ENCODE measurements at regions of chr22 and their contacts with region 1.

Region 1: GRCh38 chr22:43187171-43188099 is 501 bp upstream of the TTLL12 start:
- DNase-seq: peak; percentile 80 to 98
- H3K4me3 ChIP-seq: peak overlapping the region; percentile 52 to 96
- H3K27ac ChIP-seq: peak overlapping the region; percentile 91 to 95
- H3K4me1 ChIP-seq: peaks cover 0 to 19% of the 10 kb centered on the region in 2 donors
- H3K27me3 ChIP-seq: no peaks in the 10 kb centered on the region
- CTCF ChIP-seq: peak; percentile 45 to 74 (median 65)

Region 2: DNA sequence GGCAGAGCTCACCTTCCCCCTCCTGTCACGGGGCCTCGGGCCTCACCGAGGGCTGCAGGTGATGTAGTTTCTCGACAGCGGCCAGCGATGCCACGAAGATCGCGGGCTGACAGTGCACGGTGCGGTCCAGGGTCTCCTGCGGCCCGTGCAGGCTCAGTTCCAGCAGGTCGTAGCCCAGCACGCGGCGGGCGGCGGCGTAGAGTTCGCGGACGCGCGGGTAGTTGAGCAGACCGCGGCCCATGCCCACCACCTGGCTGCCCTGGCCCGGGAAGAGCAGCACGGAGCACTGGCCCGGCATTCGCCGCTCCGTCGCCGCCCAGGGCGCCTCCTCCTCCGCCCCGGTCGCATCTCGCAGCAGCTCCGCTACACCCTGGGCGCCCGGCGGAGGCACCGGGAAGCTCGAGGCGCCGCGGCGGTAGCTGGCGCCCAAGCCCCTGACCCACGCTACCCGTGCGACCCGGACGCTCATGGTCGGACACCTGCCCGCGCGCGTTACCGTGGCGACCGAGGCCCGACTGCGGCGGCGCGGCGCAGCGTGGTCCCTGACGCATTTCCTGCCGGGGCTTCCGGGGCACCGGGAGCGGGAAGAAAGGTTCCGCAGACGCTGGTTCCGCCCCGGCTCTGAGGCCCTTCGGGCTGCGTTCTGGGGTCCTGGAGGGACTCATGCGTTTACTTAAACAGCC is 44.4 kb before region 1 on chr22 and contains the start of gene MCAT:
- intact Hi-C with region 1: loop called (anchors 2 kb)
- DNase-seq: peak in 1 of 2 donors; percentile 92
- H3K4me3 ChIP-seq: peak within 1 kb of the TSS; percentile 65 to 88
- H3K27ac ChIP-seq: peak within 1 kb of the TSS; percentile 33 to 77
- H3K4me1 ChIP-seq: peaks cover 3 to 11% of the 10 kb centered on the region in 2 donors
- H3K27me3 ChIP-seq: no peaks in the 10 kb centered on the region
- CTCF ChIP-seq: no peak
- total RNA-seq, gene MCAT: 4.6 TPM

Region 3: DNA sequence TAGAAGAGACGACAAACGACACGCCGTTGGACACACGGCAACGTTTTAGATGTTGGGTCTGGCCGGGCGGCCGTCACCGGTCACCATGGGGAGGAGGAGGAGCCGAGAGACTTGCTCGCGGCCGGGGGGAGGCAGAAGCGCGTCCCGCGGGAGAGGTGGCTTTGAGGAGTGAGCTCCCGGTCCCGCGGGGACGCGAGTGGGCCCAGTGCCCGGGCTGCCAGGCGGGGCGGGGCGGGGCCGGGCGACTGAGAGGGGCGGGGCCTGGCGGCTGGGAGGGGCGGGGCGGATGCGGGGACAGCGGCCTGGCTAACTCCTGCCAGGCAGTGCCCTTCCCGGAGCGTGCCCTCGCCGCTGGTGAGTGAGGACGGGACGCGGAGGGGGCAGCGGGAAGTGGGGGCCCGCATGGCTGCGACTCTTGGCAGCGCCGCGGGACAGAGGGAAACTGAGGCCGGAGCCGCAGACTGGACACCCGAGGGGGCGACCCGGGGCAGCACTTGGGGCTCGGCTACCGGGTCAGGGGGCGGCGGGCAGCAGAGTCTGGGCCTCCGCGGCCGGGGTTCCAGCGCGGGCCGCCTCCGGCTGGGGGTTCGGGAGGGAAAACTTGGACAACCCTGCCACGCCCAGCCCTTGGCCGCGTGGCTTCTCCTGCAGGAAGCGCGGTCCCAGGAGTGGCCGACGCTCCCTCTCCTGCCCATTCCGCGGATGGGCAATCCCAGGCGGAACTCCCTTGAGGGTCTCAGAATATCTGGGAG is 36.0 kb before region 1 on chr22 and contains the start of gene TSPO:
- intact Hi-C with region 1: loop called (anchors 1 kb)
- DNase-seq: peak; percentile 42 to 92
- H3K4me3 ChIP-seq: peak within 1 kb of the TSS; percentile 61 to 83
- H3K27ac ChIP-seq: peak within 1 kb of the TSS; percentile 77 to 94
- H3K4me1 ChIP-seq: peaks cover 6 to 10% of the 10 kb centered on the region in 2 donors
- H3K27me3 ChIP-seq: no peaks in the 10 kb centered on the region
- CTCF ChIP-seq: no peak
- total RNA-seq, gene TSPO: 961 TPM

Measured in ascending aorta (tissue), 2 donors.